ENCODE measurements at regions of chr1 and their contacts with region 1.

Region 1: GRCh38 chr1:165914136-165914798 is 86.9 kb downstream of the UCK2 start:
- DNase-seq: peak; percentile 82
- H3K4me3 ChIP-seq: no peak overlapping the region
- H3K27ac ChIP-seq: no peak overlapping the region
- H3K4me1 ChIP-seq: peaks cover 7% of the 10 kb centered on the region
- H3K27me3 ChIP-seq: no peaks in the 10 kb centered on the region
- CTCF ChIP-seq: peak; percentile 64 to 93 (median 85)
- POLR2A ChIP-seq: no peak

Region 2: DNA sequence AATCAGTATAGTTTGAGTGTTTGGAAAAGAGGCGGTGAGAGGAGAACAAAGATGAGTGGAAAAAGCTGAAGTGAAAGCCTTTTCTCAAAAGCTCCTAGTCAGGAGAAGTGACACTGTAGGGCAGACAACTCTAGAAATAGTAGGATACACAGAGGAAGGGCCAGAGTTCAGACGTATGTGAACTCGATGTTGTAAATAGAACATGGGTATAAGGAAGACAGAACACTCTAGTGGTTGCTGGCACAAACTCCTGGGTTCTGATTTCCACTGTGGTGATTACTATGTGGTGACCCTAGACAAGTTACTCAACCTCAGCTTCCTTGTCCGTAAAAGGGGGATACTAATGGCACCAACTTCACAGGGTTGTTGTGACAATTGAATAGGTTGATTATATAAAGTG is 313.5 kb before region 1 on chr1:
- intact Hi-C with region 1: loop called (anchors 5 kb)
- DNase-seq: no peak
- H3K4me3 ChIP-seq: no peak overlapping the region
- H3K27ac ChIP-seq: no peak overlapping the region
- H3K4me1 ChIP-seq: peaks cover 3% of the 10 kb centered on the region
- H3K27me3 ChIP-seq: no peaks in the 10 kb centered on the region
- CTCF ChIP-seq: no peak
- POLR2A ChIP-seq: no peak

Region 3: DNA sequence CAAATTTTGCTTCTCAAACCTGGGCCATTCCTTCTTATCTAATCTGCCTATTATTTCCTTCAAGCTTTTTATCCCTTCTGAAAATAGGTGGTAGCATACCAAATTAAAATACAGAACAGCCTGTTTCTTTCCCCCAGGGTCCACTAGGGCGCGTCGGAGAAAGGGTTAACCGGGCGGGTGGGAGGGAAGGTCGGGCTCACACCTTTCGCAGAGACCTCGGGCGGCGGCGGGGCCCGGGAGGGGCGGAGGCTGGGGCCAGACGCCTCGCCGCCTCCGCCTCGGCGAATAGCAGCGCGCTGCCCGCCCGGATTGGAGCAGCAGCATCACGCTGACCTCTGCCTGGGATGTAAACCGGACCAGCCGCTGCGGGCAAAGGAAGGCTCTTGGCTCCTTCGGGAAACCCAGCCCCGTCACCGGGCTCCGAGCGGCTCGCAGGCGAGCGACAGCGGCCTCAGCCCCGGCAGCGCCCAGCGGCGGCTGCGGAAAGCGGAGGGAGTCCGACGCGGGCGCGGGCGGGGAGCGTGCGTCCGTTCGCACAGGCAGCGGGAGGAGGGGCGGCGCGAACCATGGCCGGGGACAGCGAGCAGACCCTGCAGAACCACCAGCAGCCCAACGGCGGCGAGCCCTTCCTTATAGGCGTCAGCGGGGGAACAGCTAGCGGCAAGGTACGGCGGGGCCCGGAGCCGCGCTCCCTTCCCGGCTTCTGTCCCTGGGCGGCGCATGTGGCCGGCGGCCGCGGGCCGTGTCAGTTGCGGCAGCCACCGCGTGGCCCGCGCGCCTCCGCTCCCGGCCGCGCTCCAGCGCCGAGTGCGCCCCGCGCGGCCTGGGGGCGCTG is 86.8 kb before region 1 on chr1 and contains the start of gene UCK2:
- intact Hi-C with region 1: loop called (anchors 10 kb)
- DNase-seq: peak; percentile 82
- H3K4me3 ChIP-seq: peak within 1 kb of the TSS; percentile 68 to 93
- H3K27ac ChIP-seq: peak within 1 kb of the TSS; percentile 83 to 86
- H3K4me1 ChIP-seq: peaks cover 12% of the 10 kb centered on the region
- H3K27me3 ChIP-seq: no peaks in the 10 kb centered on the region
- CTCF ChIP-seq: peak in 1 of 3 experiments; percentile 12
- POLR2A ChIP-seq: no peak
- total RNA-seq, gene UCK2: 27.6 to 29.7 TPM

Region 4: DNA sequence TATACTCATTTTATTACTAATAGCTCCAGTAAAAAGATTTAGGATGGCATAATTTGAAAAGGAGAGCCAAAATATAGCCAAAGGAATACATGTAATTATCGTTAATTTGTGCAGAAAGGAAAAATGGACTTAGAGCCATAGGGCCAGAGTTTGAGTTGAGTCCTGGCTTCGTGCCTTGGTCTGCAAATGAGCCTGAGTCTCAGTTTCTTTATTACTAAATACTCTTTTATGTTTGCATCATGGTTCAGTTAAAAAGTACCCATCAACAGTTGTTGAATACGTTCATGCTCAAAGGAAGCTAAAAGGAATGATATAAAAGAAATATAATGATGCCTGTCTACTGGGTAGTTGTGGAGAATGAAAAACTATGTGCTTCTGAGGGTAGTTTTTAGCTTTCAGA is 408.2 kb after region 1 on chr1:
- intact Hi-C with region 1: no loop called
- DNase-seq: no peak
- H3K4me3 ChIP-seq: no peak overlapping the region
- H3K27ac ChIP-seq: no peak overlapping the region
- H3K4me1 ChIP-seq: no peaks in the 10 kb centered on the region
- H3K27me3 ChIP-seq: no peaks in the 10 kb centered on the region
- CTCF ChIP-seq: no peak
- POLR2A ChIP-seq: no peak

Measured in testis (tissue), 5 donors.